PC-9 (cell line): ENCODE measurements at regions of chr2 and their contacts with region 1.

Region 1: GRCh38 chr2:234135720-234136221 is 85.3 kb downstream of the SPP2 start:
- DNase-seq: peak; percentile 91 to 93
- H3K4me3 ChIP-seq: no peak overlapping the region
- H3K27ac ChIP-seq: peak overlapping the region; percentile 66
- H3K4me1 ChIP-seq: peaks cover 30% of the 10 kb centered on the region
- H3K27me3 ChIP-seq: no peaks in the 10 kb centered on the region
- CTCF ChIP-seq: peak; percentile 90

Region 2: GRCh38 chr2:234193977-234194563 is 58.3 kb after region 1 on chr2:
- CTCF ChIA-PET with region 1: no interaction called
- POLR2A ChIA-PET with region 1: interaction called, 5 read pairs
- intact Hi-C with region 1: loop called (anchors 2 kb)
- DNase-seq: peak in 1 of 2 experiments; percentile 63
- H3K4me3 ChIP-seq: no peak overlapping the region
- H3K27ac ChIP-seq: no peak overlapping the region
- H3K4me1 ChIP-seq: peaks cover 31% of the 10 kb centered on the region
- H3K27me3 ChIP-seq: no peaks in the 10 kb centered on the region
- CTCF ChIP-seq: no peak

Region 3: GRCh38 chr2:234251326-234252271 is 115.8 kb after region 1 on chr2:
- CTCF ChIA-PET with region 1: interaction called, 10 read pairs
- POLR2A ChIA-PET with region 1: interaction called, 4 read pairs
- intact Hi-C with region 1: loop called (anchors 1 kb)
- DNase-seq: peak; percentile 81 to 99
- H3K4me3 ChIP-seq: no peak overlapping the region
- H3K27ac ChIP-seq: peak overlapping the region; percentile 91
- H3K4me1 ChIP-seq: peaks cover 80% of the 10 kb centered on the region
- H3K27me3 ChIP-seq: no peaks in the 10 kb centered on the region
- CTCF ChIP-seq: no peak

Region 4: GRCh38 chr2:234335661-234336228 is 200.0 kb after region 1 on chr2:
- CTCF ChIA-PET with region 1: no interaction called
- POLR2A ChIA-PET with region 1: no interaction called
- intact Hi-C with region 1: loop called (anchors 2 kb)
- DNase-seq: peak in 1 of 2 experiments; percentile 39
- H3K4me3 ChIP-seq: no peak overlapping the region
- H3K27ac ChIP-seq: no peak overlapping the region
- H3K4me1 ChIP-seq: peaks cover 16% of the 10 kb centered on the region
- H3K27me3 ChIP-seq: no peaks in the 10 kb centered on the region
- CTCF ChIP-seq: no peak

Region 5: DNA sequence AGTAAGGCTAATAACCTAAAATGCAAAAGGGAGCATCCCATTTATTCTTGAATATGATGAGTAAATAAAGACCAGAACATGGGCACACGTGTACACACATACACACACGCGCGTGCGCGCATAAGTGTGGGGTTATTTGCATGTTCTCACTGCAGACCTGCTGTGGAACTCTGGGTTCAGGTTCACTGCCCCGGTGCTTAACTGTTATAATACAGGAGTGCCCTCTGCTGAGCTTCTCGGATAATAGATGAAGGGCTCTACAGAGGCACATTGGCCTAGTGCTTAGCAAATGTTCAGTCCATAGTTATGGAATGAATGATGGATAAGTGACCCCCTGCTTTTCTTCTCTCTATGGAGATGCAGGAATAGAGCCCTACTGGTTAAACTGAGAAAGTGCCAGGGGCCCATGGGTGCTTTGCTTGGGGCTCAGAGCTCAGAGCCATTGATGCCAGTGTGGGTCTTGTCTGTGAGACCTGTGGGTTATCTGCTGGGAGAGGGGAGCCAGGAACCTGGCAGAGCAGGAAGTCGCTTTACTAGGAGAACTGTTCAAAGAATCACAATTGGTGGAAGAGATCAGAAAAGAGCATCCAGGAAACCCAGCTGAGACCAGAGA is 364.7 kb after region 1 on chr2:
- CTCF ChIA-PET with region 1: interaction called, 7 read pairs
- POLR2A ChIA-PET with region 1: interaction called, 15 read pairs
- intact Hi-C with region 1: loop called (anchors 1 kb)
- DNase-seq: peak; percentile 46 to 57
- H3K4me3 ChIP-seq: no peak overlapping the region
- H3K27ac ChIP-seq: no peak overlapping the region
- H3K4me1 ChIP-seq: peaks cover 17% of the 10 kb centered on the region
- H3K27me3 ChIP-seq: no peaks in the 10 kb centered on the region
- CTCF ChIP-seq: peak; percentile 70